ENCODE measurements at regions of chr3 and their contacts with region 1.

Region 1: GRCh38 chr3:100590114-100590839 is 19.1 kb upstream of the ADGRG7 start:
- DNase-seq: peak; percentile 80
- H3K4me3 ChIP-seq: peak overlapping the region in 1 of 3 experiments; percentile 44
- H3K27ac ChIP-seq: no peak overlapping the region
- H3K4me1 ChIP-seq: peaks cover 3% of the 10 kb centered on the region
- H3K27me3 ChIP-seq: peaks cover 0 to 2% of the 10 kb centered on the region in 2 experiments
- CTCF ChIP-seq: peak; percentile 68 to 76
- POLR2A ChIP-seq: no peak

Region 2: GRCh38 chr3:100032243-100032642 is 558.0 kb before region 1 on chr3:
- CTCF ChIA-PET with region 1: no interaction called
- POLR2A ChIA-PET with region 1: no interaction called
- dilution Hi-C with region 1: no loop called
- intact Hi-C with region 1: no loop called
- DNase-seq: no peak
- H3K4me3 ChIP-seq: no peak overlapping the region
- H3K27ac ChIP-seq: no peak overlapping the region
- H3K4me1 ChIP-seq: peaks cover 3% of the 10 kb centered on the region
- H3K27me3 ChIP-seq: no peaks in the 10 kb centered on the region
- CTCF ChIP-seq: no peak
- POLR2A ChIP-seq: no peak

Region 3: GRCh38 chr3:100316641-100317069 is 273.6 kb before region 1 on chr3:
- CTCF ChIA-PET with region 1: interaction called, 50 read pairs
- POLR2A ChIA-PET with region 1: no interaction called
- dilution Hi-C with region 1: no loop called
- intact Hi-C with region 1: loop called (anchors 1 kb)
- DNase-seq: peak; percentile 64
- H3K4me3 ChIP-seq: no peak overlapping the region
- H3K27ac ChIP-seq: no peak overlapping the region
- H3K4me1 ChIP-seq: no peaks in the 10 kb centered on the region
- H3K27me3 ChIP-seq: no peaks in the 10 kb centered on the region
- CTCF ChIP-seq: peak; percentile 46 to 48
- POLR2A ChIP-seq: no peak

Region 4: GRCh38 chr3:100412912-100413590 is 177.2 kb before region 1 on chr3:
- CTCF ChIA-PET with region 1: no interaction called
- POLR2A ChIA-PET with region 1: no interaction called
- dilution Hi-C with region 1: no loop called
- intact Hi-C with region 1: no loop called
- DNase-seq: no peak
- H3K4me3 ChIP-seq: no peak overlapping the region
- H3K27ac ChIP-seq: no peak overlapping the region
- H3K4me1 ChIP-seq: no peaks in the 10 kb centered on the region
- H3K27me3 ChIP-seq: no peaks in the 10 kb centered on the region
- CTCF ChIP-seq: no peak
- POLR2A ChIP-seq: no peak

Region 5: DNA sequence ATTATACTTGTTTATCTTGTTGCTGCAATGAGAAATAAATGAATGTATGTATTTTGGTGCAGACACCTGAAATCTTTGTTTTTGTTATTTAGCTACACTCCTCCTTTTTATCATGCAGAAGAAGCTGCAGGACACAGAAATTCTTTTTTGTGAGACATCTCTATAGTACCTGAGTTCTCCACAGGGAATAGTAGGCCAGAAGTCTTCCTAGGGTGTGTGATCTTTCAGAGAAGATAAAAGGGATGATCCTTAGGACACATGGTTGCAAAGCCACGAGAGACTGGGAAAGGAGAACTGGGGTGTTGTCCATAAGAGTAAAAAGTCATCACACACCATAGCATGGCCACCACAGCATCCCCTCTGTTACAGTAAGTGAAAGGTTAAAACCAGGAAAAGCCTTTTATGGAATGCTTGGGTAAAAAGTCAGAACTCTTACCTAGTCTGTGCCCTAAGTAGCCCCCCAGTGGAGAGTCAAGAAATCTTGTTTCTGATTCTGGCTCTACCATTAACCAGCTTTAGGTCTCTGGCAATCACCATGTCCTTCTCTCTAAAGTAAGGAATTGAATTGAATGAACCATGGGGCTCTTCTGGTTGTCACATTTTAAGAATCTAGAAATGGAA is 12.8 kb before region 1 on chr3:
- CTCF ChIA-PET with region 1: interaction called, 26 read pairs
- POLR2A ChIA-PET with region 1: no interaction called
- dilution Hi-C with region 1: no loop called
- intact Hi-C with region 1: no loop called
- DNase-seq: no peak
- H3K4me3 ChIP-seq: no peak overlapping the region
- H3K27ac ChIP-seq: no peak overlapping the region
- H3K4me1 ChIP-seq: no peaks in the 10 kb centered on the region
- H3K27me3 ChIP-seq: no peaks in the 10 kb centered on the region
- CTCF ChIP-seq: no peak
- POLR2A ChIP-seq: no peak

Region 6: DNA sequence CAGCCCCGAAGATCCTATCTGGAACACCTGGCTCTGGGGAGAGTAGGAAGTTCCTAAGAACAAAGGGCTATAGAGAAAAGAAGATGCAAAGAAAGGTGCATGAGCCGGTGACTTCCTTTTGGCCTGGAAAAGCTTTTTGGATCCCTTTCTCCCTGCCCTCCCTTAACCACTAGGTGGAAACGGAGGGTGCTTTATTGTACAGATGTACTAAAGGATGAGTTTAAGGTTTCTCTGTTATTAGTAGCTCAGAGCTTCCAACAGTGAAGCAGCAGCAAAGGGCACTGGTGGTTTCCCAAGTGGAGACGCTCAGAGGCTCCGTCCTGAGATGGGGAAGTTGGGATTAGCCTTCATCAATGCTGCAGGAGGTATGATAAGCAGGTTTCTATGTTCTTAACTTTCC is 13.2 kb after region 1 on chr3:
- CTCF ChIA-PET with region 1: interaction called, 25 read pairs
- POLR2A ChIA-PET with region 1: no interaction called
- dilution Hi-C with region 1: no loop called
- intact Hi-C with region 1: no loop called
- DNase-seq: peak; percentile 13
- H3K4me3 ChIP-seq: no peak overlapping the region
- H3K27ac ChIP-seq: no peak overlapping the region
- H3K4me1 ChIP-seq: no peaks in the 10 kb centered on the region
- H3K27me3 ChIP-seq: peaks cover 2 to 7% of the 10 kb centered on the region in 2 experiments
- CTCF ChIP-seq: peak; percentile 18 to 22
- POLR2A ChIP-seq: no peak

Measured in endothelial cell of umbilical vein (primary cell).